Cardiac septum (tissue), 1 donor: ENCODE measurements at regions of chr10 and their contacts with region 1.

Region 1: DNA sequence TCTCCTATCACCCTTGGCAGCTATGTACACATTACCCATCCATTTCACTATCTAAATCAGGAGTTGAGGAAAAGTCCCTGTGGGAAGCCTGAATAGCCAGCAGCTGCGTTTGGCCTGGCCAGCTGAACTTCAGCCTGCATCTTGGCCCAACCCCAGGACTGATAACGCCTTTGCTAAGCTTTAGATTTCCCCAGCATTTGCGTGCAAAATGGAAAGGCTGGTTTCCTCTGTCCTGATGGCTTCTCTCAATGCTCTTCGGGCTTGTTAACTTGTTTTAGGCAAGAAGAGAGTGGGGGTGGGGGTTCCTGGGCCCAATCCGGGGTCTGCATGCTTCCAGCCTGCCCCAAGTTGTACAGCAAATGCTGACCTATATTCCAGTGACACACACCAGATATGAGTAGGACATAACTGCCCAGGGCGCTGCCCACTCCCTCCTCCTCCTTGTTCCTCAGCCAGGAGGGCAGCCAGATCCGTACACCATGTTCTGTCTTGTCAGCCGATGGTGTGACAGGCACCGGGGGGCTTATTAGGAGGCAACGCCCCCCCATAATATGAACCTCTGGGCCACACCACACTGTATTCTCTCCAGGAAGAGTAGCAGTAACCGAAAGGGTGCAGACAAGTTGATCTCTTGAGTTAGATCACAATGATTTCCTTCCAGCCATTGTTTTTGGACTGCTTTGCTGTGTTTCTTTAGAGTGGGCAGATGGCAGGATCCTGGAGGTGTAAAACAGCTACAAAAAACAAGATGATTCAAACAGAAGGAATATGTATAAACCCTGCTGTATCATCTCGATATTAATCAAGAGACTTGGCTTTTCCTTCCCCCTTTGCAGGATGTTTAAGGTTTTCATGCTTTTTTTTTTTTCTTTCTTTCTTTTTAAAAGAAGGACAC is 339.0 kb downstream of the RNLS start:
- DNase-seq: peak; percentile 78

Region 2: GRCh38 chr10:88152720-88153119 is 91.4 kb before region 1 on chr10:
- intact Hi-C with region 1: loop called (anchors 10 kb)
- DNase-seq: no peak

Region 3: GRCh38 chr10:88293073-88293472 is 49.0 kb after region 1 on chr10:
- intact Hi-C with region 1: no loop called
- DNase-seq: no peak

Region 4: GRCh38 chr10:88330174-88330573 is 86.1 kb after region 1 on chr10:
- intact Hi-C with region 1: no loop called
- DNase-seq: no peak

Region 5: GRCh38 chr10:88386821-88387773 is 143.0 kb after region 1 on chr10:
- intact Hi-C with region 1: loop called (anchors 5 kb)
- DNase-seq: no peak

Region 6: GRCh38 chr10:89391917-89392756 is 1148.1 kb after region 1 on chr10 and contains the start of gene IFIT1:
- intact Hi-C with region 1: no loop called
- DNase-seq: no peak
- total RNA-seq, gene IFIT1: 9.8 TPM